ENCODE measurements at regions of chr11 and their contacts with region 1.

Region 1: DNA sequence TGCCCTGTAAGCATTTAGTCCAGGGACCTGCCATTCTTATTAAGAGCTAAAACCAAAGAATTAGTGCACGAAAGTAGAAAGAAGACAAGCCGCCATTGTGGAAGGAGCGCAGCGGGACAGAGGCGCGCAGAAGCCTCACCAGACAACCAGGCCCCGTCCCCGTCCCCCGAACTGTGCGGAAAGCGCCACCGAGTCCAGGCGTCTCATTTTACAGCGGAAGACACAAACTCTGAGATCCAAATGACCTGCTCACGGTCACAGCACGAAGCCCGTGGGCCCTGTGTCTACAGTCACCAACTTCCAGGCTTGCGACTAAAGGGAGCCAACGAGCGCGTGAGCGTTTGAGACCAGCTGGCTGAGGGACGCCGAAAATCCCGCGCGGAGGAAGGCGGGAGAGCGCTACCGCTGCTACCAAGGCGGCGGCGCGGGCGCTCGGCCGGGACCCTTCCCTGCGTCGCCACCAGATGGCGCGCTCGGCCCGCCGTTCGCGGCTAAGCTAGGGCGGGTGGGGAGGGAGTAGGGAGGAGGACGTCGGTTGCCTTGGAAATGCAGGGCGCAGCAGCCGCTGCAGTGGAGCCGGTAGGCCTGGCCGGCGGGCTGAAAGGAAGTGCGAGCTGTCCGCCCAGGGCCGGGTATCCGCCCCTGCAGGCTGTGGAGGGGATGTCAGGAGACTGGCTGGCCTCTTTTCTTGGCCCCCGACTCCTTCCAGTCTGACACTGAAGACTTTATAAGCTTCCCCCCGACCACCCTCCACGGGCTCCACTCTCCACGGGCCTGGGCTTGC is 434 bp upstream of the CCDC83 start:
- DNase-seq: peak; percentile 88 to 91
- ATAC-seq: peak; percentile 98 to 99 (median 98)
- H3K4me3 ChIP-seq: peak overlapping the region; percentile 32 to 69 (median 60)
- H3K27ac ChIP-seq: peak overlapping the region; percentile 41 to 93 (median 84)
- H3K4me1 ChIP-seq: peaks cover 0 to 18% (median 8%) of the 10 kb centered on the region in 9 donors
- H3K27me3 ChIP-seq: no peaks in the 10 kb centered on the region
- CTCF ChIP-seq: peak; percentile 90 to 99 (median 97)

Region 2: DNA sequence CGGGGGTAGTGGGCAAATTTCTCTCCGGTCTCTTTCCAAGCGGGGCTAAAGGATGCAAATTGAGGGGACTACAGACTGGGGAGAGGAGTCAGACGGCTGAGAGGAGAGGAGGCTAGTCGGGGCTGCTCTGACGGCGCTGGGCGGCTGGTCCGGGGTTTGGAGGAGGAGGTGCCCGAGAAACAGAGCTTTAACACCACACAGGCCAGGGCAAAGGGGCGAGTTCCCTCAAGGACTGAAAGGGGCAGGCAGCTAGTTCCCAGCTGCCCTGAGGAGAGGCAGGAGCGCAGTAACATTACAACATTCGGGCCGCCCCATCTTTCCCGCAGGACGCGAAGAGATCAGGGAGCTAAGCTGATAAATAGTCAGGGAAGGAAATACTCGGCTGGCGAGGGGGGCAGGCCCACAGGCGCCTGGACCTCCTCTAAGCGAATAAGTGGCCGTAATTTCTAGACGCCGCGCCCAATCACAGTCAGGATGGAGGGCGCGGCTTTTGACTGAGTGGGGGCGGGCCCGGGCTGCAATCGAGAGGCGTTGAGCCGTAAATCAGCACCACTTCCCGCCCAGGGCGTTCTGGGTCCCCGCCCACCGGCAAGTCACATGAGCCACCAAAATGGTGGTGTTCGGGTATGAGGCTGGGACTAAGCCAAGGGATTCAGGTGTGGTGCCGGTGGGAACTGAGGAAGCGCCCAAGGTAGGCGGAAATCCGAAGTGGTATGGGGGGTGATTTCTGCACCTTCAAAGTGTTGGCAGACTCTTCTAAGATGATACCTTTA is 226.6 kb before region 1 on chr11 and contains the start of gene TMEM126B:
- intact Hi-C with region 1: no loop called
- DNase-seq: peak; percentile 97 to 98
- ATAC-seq: peak; percentile 99 to 100 (median 100)
- H3K4me3 ChIP-seq: peak within 1 kb of the TSS; percentile 59 to 84 (median 78)
- H3K27ac ChIP-seq: peak within 1 kb of the TSS; percentile 77 to 96 (median 92)
- H3K4me1 ChIP-seq: peaks cover 0 to 45% (median 26%) of the 10 kb centered on the region in 9 donors
- H3K27me3 ChIP-seq: no peaks in the 10 kb centered on the region
- CTCF ChIP-seq: peak in 1 of 9 donors; percentile 3
- total RNA-seq, gene TMEM126B: 44.3 to 63.2 (median 51.6) TPM

Region 3: DNA sequence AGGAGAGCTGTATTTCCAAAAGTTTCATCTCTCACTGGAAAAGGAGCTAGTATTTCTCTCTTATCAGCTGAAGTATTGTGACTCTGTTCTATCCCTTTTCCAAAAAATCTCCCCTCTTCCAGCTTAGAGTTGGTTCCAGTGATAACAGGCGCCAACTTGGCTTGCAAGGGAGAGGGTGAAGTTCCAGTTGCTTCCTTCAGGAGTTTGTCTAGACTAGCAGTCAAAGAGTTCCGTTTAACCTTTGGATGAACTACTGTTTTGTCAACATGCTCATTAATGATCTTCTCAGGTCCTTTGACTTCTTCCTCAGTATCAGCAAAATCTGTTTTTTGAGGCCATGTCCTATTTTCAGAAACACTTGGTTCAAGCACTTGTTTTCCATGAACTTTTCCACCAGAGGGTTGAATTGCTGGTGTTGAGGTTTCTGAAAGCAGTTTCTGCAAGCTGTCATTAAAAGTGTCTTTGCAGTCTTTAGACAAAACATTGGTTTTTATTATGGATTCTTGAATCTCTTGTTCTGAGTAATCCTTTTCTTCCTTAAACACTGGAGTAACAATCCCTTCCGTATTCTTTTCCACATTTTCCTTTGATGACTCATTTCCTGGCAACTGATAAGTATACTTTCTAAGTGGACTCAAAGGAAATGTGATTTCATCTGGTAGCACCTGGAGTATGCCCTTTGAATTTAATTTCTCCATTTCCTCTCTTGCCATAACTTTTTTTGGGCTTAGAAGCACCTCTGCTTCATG is 129.1 kb before region 1 on chr11:
- intact Hi-C with region 1: no loop called
- DNase-seq: no peak
- ATAC-seq: peak in 6 of 8 donors; percentile 34 to 81 (median 51)
- H3K4me3 ChIP-seq: no peak overlapping the region
- H3K27ac ChIP-seq: peak overlapping the region; percentile 11 to 84 (median 44)
- H3K4me1 ChIP-seq: peaks cover 0 to 28% (median 14%) of the 10 kb centered on the region in 9 donors
- H3K27me3 ChIP-seq: no peaks in the 10 kb centered on the region
- CTCF ChIP-seq: no peak

Region 4: GRCh38 chr11:85810871-85811611 is 43.7 kb before region 1 on chr11 and contains the start of gene SYTL2:
- intact Hi-C with region 1: no loop called
- DNase-seq: peak; percentile 58 to 80
- ATAC-seq: peak; percentile 95 to 99 (median 98)
- H3K4me3 ChIP-seq: peak within 1 kb of the TSS; percentile 49 to 82 (median 70)
- H3K27ac ChIP-seq: peak within 1 kb of the TSS in 7 of 10 donors; percentile 17 to 72 (median 30)
- H3K4me1 ChIP-seq: peaks cover 5 to 20% (median 12%) of the 10 kb centered on the region in 9 donors
- H3K27me3 ChIP-seq: peaks cover 0 to 20% (median 0%) of the 10 kb centered on the region in 7 donors
- CTCF ChIP-seq: peak in 3 of 9 donors; percentile 26 to 39 (median 35)
- total RNA-seq, gene SYTL2: 3.5 to 16.1 (median 5.3) TPM

Region 5: GRCh38 chr11:85922367-85922766 is 67.6 kb after region 1 on chr11:
- intact Hi-C with region 1: no loop called
- DNase-seq: no peak
- ATAC-seq: no peak
- H3K4me3 ChIP-seq: no peak overlapping the region
- H3K27ac ChIP-seq: no peak overlapping the region
- H3K4me1 ChIP-seq: no peaks in the 10 kb centered on the region
- H3K27me3 ChIP-seq: peaks cover 0 to 11% (median 0%) of the 10 kb centered on the region in 7 donors
- CTCF ChIP-seq: no peak

Region 6: DNA sequence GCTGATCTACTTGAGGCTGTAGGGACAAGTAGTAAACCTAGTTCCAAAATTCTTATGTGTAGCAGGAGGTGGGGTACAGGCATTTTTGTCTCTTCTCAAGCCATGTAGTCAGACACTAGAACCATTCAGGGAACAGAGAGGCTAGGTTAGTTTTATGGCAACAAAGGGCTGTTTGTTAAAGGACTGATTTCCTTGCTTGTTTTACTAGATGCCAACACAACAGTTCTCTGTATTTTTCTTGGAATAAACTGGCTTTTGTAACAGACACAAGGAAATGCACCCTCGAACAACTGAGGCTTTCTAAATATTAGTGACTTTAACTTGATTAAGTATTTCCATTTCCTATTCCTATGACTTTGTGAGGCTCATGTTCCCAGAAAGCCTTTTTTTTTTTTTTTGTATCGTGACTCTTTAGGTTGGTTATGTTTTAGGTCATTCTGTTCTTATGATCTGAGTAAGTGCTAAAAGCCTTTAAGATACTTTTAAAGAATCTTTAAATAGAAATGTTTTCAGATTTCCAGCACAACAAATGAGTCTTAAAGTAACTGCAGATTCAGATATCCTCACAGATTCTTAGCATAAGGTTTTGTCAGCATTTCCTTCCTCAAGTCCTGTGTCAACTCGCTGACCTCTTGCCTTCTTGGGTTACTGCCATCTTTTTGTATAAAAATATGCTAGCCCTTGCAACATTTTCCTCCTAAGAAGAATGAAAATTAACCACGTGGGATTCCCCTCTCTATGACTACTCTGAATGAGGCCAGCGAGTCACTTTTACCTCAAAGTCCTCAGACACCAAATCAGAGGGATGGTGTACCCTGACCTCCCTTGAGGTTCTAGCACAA is 92.9 kb after region 1 on chr11:
- intact Hi-C with region 1: loop called in 3 of 10 experiments (anchors 5 to 10 kb)
- DNase-seq: peak in 1 of 2 donors; percentile 74
- ATAC-seq: peak; percentile 64 to 90 (median 85)
- H3K4me3 ChIP-seq: no peak overlapping the region
- H3K27ac ChIP-seq: peak overlapping the region in 8 of 10 donors; percentile 30 to 86 (median 65)
- H3K4me1 ChIP-seq: peaks cover 8 to 40% (median 32%) of the 10 kb centered on the region in 9 donors
- H3K27me3 ChIP-seq: no peaks in the 10 kb centered on the region
- CTCF ChIP-seq: no peak

Region 7: GRCh38 chr11:86068951-86069407 is 214.2 kb after region 1 on chr11 and contains the start of gene PICALM:
- intact Hi-C with region 1: loop called in 1 of 10 experiments (anchors 10 kb)
- DNase-seq: peak; percentile 98 to 99
- ATAC-seq: peak; percentile 92 to 98 (median 96)
- H3K4me3 ChIP-seq: peak within 1 kb of the TSS; percentile 77 to 99 (median 92)
- H3K27ac ChIP-seq: peak within 1 kb of the TSS; percentile 96 to 99 (median 98)
- H3K4me1 ChIP-seq: peaks cover 2 to 44% (median 34%) of the 10 kb centered on the region in 9 donors
- H3K27me3 ChIP-seq: no peaks in the 10 kb centered on the region
- CTCF ChIP-seq: peak in 1 of 9 donors; percentile 18
- total RNA-seq, gene PICALM: 124 to 206 (median 170) TPM

Region 8: DNA sequence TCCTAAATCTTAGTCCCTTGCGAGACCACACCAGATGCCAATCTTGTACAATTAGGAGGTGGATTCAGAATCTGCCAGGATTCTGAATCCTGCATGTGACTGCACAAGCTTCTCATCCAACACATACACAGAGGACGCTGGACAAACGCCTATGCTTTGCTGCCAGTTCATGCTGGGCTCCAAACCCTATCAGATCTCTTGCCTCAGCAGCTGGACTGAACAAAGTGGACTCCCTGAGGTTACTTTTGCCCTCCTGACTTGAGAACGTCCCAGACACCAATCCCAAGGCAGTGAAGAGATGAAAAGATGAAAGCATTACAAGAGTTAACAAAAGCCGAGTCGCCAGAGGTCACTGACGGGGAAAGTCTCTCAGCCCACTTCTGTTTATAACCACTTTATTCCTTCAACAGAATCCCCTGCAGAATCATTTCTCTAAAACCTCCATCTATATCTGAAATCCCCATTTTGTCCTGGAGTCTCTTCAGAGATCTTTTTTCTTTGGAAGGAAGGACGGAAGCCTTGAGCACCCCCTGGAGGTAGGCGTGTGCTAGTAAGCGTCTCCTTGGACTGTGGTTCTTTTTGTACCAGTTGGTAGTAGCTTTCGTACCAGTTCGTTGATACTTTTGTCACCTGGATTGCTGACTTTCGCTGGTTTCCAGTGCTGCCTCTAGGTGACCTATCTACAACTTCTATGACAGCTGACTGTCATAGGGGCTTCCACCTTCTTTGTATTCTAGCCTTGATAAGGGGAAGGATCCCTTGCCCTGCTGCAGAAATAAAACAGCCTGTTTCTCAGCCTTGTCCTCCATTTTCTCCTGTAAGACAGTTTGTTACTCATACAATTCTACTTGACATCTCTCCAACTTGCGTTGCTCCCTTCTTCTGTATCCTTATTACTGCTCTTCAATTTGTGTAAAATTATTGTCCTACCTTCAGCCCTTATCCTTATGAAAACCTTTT is 363.7 kb after region 1 on chr11:
- intact Hi-C with region 1: loop called in 7 of 10 experiments (anchors 2 to 10 kb)
- DNase-seq: peak; percentile 52 to 77
- ATAC-seq: peak; percentile 83 to 96 (median 92)
- H3K4me3 ChIP-seq: peak overlapping the region in 9 of 10 donors; percentile 10 to 52 (median 40)
- H3K27ac ChIP-seq: peak overlapping the region in 3 of 10 donors; percentile 11 to 26 (median 22)
- H3K4me1 ChIP-seq: peaks cover 0 to 19% (median 7%) of the 10 kb centered on the region in 9 donors
- H3K27me3 ChIP-seq: no peaks in the 10 kb centered on the region
- CTCF ChIP-seq: peak; percentile 75 to 96 (median 91)

Region 9: DNA sequence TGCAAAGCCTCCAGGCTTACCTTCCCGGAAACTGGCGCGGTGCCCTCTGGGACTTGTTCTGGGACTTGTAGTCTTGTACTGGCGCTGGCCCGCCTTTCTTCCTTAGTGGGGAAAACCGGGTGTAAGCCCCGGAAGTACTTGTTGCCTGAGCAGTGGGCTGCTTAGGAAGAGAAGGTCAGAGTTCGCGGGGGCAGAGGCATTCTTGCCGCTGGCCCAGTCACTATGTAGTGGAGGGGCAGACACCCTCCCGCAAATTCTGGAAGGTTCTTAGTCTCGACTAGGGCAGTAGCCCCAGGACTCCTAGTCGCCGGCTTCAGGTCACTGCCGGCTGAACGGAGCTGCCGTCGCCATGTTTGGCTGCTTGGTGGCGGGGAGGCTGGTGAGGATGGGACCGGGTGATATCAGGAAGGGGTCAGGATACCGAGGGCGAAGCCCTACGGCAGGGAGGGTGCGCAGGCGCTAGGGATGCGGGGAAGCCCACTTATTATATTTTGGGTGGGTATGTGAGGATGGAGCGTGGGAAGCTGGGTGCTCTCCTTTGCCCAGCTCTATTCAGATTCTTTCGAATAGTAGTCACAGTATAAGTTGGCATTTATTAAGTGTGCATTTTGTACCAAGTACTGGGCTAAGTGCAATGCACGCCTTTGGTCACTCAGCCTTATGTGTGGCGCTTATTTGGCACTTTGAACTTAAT is 447.5 kb after region 1 on chr11 and contains the start of gene HIKESHI:
- intact Hi-C with region 1: loop called in 2 of 10 experiments (anchors 10 kb)
- DNase-seq: peak; percentile 100
- ATAC-seq: peak; percentile 98 to 100 (median 100)
- H3K4me3 ChIP-seq: peak within 1 kb of the TSS; percentile 70 to 94 (median 79)
- H3K27ac ChIP-seq: peak within 1 kb of the TSS; percentile 5 to 93 (median 88)
- H3K4me1 ChIP-seq: peaks cover 0 to 27% (median 16%) of the 10 kb centered on the region in 9 donors
- H3K27me3 ChIP-seq: no peaks in the 10 kb centered on the region
- CTCF ChIP-seq: no peak
- total RNA-seq, gene HIKESHI: 42.5 to 54.6 (median 47.1) TPM